ENCODE measurements at regions of chr2 and their contacts with region 1.

Region 1: DNA sequence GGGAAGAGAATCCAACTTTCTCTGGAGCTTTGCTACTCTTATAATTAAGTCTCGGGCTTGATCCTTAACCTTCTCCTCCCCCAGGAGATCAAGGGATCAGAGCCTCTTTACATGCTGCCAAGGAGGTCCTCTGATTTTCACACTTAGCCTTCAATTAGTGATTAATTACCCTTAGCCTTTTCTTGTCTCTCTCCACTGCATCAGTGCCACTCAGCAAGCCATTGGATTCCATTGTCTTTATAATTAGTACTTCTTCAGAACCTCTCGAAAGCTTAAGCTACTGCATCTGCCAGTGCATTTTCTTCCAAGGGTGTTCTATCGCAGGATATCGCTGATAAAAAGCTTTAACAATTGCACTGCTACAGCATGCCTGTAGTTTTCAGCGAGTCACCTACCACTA is 477.0 kb upstream of the MEIS1 start:
- DNase-seq: no peak
- H3K4me3 ChIP-seq: no peak overlapping the region
- H3K27ac ChIP-seq: no peak overlapping the region
- H3K4me1 ChIP-seq: no peaks in the 10 kb centered on the region
- H3K27me3 ChIP-seq: peaks cover 0 to 3% (median 0%) of the 10 kb centered on the region in 4 donors
- CTCF ChIP-seq: no peak
- EP300 ChIP-seq: no peak
- POLR2A ChIP-seq: no peak

Region 2: DNA sequence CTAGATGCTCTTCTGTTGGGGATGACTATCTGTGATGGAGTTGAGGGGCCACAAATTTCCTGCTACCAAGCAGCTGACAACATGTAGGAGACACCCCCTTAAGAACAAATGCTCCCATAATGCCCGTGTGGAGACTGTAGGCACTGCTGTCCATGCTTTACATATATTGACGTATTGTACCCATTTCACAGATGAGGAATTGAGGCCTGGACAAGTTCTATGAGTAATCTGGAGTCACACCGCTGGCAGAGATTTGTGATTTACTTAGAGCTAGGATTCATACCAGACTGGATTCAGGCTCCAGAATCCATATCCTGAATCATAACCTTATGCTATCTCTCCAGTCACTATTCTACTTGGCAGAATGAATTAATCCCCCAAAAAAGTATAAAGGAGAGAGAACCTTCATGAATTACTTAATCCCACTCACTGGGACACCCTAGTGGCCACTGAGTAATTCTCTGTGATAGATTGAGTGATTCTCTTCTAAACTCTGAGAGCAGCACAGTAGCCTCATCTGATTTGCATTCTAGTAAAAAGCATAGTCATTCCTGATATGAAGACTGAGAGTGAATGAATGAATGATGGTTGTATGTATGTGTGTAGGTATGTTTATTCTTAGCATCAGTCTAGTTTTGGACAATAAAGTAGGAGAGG is 16.3 kb after region 1 on chr2:
- intact Hi-C with region 1: loop called (anchors 2 kb)
- DNase-seq: no peak
- H3K4me3 ChIP-seq: no peak overlapping the region
- H3K27ac ChIP-seq: no peak overlapping the region
- H3K4me1 ChIP-seq: no peaks in the 10 kb centered on the region
- H3K27me3 ChIP-seq: no peaks in the 10 kb centered on the region
- CTCF ChIP-seq: no peak
- EP300 ChIP-seq: no peak
- POLR2A ChIP-seq: no peak